BJ (cell line): ENCODE measurements at regions of chr12 and their contacts with region 1.

Region 1: DNA sequence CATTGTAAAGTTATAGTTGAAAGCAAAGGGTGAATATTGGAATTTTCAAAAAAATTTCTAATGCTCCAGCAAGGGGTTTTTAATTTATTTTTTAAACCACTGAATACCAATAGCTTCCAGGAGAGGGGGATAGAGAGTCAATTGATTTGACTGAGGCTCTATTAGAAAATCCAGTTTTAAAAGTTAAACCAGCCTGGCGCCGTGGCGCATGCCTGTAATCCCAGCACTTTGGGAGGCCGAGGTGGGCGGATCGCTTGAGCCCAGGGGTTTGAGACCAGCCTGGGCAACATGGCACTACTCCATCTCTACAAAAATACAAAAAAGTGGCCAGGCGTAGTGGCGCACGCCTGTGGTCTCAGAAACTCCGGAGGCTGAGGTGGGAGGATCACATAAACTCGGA is 150.1 kb downstream of the SLC38A4 start:
- DNase-seq: no peak
- H3K4me3 ChIP-seq: no peak overlapping the region
- H3K27me3 ChIP-seq: no peaks in the 10 kb centered on the region
- CTCF ChIP-seq: peak; percentile 53

Region 2: GRCh38 chr12:46246021-46246700 is 429.6 kb before region 1 on chr12:
- CTCF ChIA-PET with region 1: no interaction called
- POLR2A ChIA-PET with region 1: no interaction called
- DNase-seq: no peak
- H3K4me3 ChIP-seq: no peak overlapping the region
- H3K27me3 ChIP-seq: no peaks in the 10 kb centered on the region
- CTCF ChIP-seq: no peak

Region 3: GRCh38 chr12:46590991-46591703 is 84.6 kb before region 1 on chr12:
- CTCF ChIA-PET with region 1: no interaction called
- POLR2A ChIA-PET with region 1: no interaction called
- DNase-seq: no peak
- H3K4me3 ChIP-seq: no peak overlapping the region
- H3K27me3 ChIP-seq: no peaks in the 10 kb centered on the region
- CTCF ChIP-seq: no peak

Region 4: DNA sequence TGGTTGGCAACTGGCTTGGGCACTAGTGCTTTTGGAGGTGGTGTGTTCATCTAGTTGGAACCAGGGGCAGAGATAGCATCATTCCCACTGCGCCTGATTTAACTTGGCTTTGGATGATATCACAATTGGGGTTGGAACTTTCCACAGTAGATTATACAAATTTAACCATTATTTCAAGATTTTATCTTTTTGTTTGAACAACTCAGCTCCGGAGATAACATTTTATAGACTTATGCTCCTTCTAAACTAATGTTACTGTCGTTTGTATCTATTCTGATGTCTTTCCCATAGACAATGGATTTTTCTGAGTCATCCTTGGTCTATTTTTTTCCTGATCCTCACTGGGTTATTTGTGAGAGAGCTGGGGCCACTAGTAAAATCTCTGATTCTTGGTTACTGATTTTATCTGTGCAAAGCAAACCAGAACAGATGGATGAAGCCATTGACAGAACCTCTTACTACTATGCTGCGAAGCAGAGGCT is 25.1 kb before region 1 on chr12:
- CTCF ChIA-PET with region 1: no interaction called
- POLR2A ChIA-PET with region 1: no interaction called
- DNase-seq: no peak
- H3K4me3 ChIP-seq: no peak overlapping the region
- H3K27me3 ChIP-seq: no peaks in the 10 kb centered on the region
- CTCF ChIP-seq: no peak

Region 5: GRCh38 chr12:46686267-46686942 is 10.7 kb after region 1 on chr12:
- CTCF ChIA-PET with region 1: interaction called, 18 read pairs
- POLR2A ChIA-PET with region 1: no interaction called
- DNase-seq: no peak
- H3K4me3 ChIP-seq: no peak overlapping the region
- H3K27me3 ChIP-seq: no peaks in the 10 kb centered on the region
- CTCF ChIP-seq: no peak